HCT116 (cell line): ENCODE measurements at regions of chr16 and their contacts with region 1.

Region 1: GRCh38 chr16:89958068-89958467 is 9.5 kb downstream of the DEF8 start:
- DNase-seq: peak; percentile 40
- ATAC-seq: peak; percentile 93
- H3K4me3 ChIP-seq: no peak overlapping the region
- H3K27ac ChIP-seq: no peak overlapping the region
- H3K4me1 ChIP-seq: no peaks in the 10 kb centered on the region
- H3K27me3 ChIP-seq: no peaks in the 10 kb centered on the region
- CTCF ChIP-seq: no peak
- POLR2A ChIP-seq: no peak
- RAD21 ChIP-seq: no peak

Region 2: DNA sequence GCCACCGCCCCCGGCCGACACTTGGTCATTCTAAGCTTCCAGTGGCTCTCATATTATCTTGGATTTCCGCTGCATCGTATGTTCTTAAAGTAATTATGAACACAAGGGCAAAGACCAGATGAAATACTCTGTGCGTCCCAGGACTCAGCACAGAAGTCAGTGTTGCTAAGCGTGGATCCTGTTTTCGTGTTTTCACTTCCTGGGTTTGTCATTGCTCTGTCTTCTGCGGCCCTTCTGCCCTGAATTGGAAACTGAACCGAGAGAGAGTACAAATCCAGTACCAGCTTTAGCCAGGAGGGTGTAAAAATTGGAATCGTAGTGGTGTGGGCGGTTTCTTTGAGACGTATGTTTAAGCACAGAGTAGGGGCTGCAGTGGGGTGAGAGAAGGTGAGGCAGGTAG is 28.5 kb after region 1 on chr16:
- CTCF ChIA-PET with region 1: no interaction called
- POLR2A ChIA-PET with region 1: no interaction called
- RAD21 ChIA-PET with region 1: no interaction called
- intact Hi-C with region 1: loop called (anchors 1 kb)
- DNase-seq: no peak
- ATAC-seq: no peak
- H3K4me3 ChIP-seq: no peak overlapping the region
- H3K27ac ChIP-seq: no peak overlapping the region
- H3K4me1 ChIP-seq: no peaks in the 10 kb centered on the region
- H3K27me3 ChIP-seq: no peaks in the 10 kb centered on the region
- CTCF ChIP-seq: no peak
- POLR2A ChIP-seq: no peak
- RAD21 ChIP-seq: no peak